ENCODE measurements at regions of chr7 and their contacts with region 1.

Region 1: DNA sequence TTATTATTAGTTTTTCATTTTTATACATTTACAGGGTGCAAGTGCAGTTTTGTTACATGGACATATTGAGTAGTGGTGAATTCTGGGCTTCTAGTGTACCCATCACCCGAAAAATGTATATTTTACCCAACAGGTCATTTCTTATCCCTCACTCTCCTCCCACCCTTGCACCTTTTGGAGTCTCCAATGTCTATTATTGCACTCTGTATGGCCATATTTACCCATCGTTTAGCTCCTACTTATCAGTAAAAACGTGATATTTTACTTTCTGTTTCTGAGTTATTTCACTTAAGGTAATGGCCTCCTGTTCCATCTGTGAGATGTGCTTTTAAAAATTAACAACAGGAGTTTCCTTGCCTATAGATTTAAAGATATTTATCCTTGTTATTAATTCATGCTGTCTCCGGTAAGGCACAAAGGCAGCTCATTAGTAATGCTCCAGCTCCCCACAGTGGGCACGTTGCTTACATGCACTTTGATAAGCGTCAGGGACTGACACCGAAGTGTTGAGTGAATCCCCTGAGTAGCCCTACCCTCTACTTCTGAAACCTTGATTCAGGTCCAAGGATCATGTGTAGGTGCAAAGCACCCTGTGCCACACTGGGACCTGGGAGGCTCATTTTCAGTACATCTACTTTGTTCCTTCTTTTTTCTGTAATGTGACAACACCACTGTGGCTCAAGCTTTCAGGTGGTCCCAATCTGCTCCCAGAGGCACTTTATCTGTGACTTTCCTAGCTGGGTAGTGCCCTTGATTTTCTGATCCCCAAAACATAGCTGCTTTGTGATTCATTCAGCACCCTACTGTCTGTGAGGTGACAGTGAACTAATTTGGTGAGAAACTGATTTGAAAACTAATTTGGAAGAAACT is 27.3 kb downstream of the HYAL4 start:
- DNase-seq: peak; percentile 61
- H3K4me3 ChIP-seq: no peak overlapping the region
- H3K27ac ChIP-seq: no peak overlapping the region
- H3K4me1 ChIP-seq: peaks cover 0 to 14% of the 10 kb centered on the region in 2 experiments; a peak in 2 of 4 replicates
- H3K27me3 ChIP-seq: no peaks in the 10 kb centered on the region; the same call in 1 of the 2 replicates
- CTCF ChIP-seq: peak; percentile 58
- EP300 ChIP-seq: no peak; a peak in 1 of 4 replicates
- RAD21 ChIP-seq: peak; percentile 93

Region 2: GRCh38 chr7:123305840-123306375 is 566.3 kb before region 1 on chr7:
- CTCF ChIA-PET with region 1: no interaction called
- POLR2A ChIA-PET with region 1: no interaction called
- DNase-seq: no peak
- H3K4me3 ChIP-seq: no peak overlapping the region
- H3K27ac ChIP-seq: no peak overlapping the region
- H3K4me1 ChIP-seq: peaks cover 0 to 6% of the 10 kb centered on the region in 2 experiments; a peak in 2 of 4 replicates
- H3K27me3 ChIP-seq: no peaks in the 10 kb centered on the region
- CTCF ChIP-seq: no peak
- EP300 ChIP-seq: no peak
- RAD21 ChIP-seq: no peak

Region 3: GRCh38 chr7:123580406-123581161 is 291.6 kb before region 1 on chr7:
- CTCF ChIA-PET with region 1: interaction called, 23 read pairs
- POLR2A ChIA-PET with region 1: no interaction called
- DNase-seq: peak; percentile 34
- H3K4me3 ChIP-seq: no peak overlapping the region; a peak in 1 of 4 replicates
- H3K27ac ChIP-seq: no peak overlapping the region
- H3K4me1 ChIP-seq: no peaks in the 10 kb centered on the region; a peak in 1 of 4 replicates
- H3K27me3 ChIP-seq: peaks cover 13% of the 10 kb centered on the region; the same call in 1 of the 2 replicates
- CTCF ChIP-seq: peak; percentile 84
- EP300 ChIP-seq: no peak
- RAD21 ChIP-seq: peak; percentile 90

Region 4: DNA sequence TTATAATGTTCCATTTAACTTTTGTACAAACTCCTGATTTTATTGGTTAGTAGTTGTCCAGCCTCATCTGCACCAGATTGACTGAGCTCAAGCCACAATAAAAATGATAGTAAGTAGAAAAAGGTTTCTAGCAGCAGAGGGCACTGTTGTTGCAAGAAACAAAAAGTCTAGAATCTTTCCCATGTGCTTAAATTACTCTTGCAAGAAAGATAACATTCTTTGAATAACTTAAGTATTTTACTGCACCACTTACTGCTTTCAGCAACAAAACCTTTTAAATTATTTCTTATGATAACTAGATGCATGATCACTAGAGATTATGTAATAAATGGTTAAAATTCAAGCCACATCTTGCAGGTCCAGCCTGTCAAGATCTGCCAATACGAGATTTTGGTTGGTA is 189.5 kb before region 1 on chr7:
- CTCF ChIA-PET with region 1: interaction called, 19 read pairs
- POLR2A ChIA-PET with region 1: no interaction called
- DNase-seq: no peak
- H3K4me3 ChIP-seq: no peak overlapping the region
- H3K27ac ChIP-seq: peak overlapping the region in 1 of 2 experiments; percentile 43; a peak in 1 of 4 replicates
- H3K4me1 ChIP-seq: peaks cover 0 to 11% of the 10 kb centered on the region in 2 experiments; a peak in 2 of 4 replicates
- H3K27me3 ChIP-seq: no peaks in the 10 kb centered on the region
- CTCF ChIP-seq: peak; percentile 82
- EP300 ChIP-seq: no peak
- RAD21 ChIP-seq: peak; percentile 79

Region 5: DNA sequence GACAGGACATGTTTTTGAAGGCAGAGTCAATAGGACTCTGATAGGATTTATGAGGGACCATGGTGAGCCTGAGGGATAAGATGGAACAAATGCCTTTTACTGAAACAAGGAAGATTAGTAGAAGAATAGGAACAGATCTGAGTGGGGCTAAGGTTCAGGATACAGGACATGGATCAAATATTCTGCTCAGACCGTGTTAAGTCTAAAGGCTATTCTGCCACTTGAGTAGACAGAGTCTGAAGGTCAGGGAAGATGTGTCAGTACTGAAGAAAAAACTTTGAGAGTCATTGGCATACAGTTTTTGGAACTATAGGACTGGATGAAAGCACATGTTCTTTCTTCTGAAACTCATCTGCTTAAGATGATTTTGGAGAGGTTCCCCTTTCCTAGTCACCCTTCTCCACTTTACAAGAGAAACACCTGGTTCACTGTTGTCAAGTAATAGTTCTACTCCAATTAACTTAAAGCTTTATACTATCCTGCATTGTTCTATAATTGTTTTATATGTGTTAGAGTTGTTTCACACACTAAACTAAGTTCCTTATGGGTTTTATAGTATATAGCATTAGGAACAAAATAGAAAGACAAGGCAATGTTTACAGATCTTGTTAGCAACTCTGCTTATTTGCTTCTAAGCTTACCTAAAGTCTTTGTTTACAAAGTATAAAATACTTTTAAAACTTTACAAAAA is 166.9 kb before region 1 on chr7:
- CTCF ChIA-PET with region 1: interaction called, 11 read pairs
- POLR2A ChIA-PET with region 1: no interaction called
- DNase-seq: no peak
- H3K4me3 ChIP-seq: no peak overlapping the region
- H3K27ac ChIP-seq: no peak overlapping the region
- H3K4me1 ChIP-seq: peaks cover under 1 to 10% of the 10 kb centered on the region in 2 experiments; a peak in 2 of 4 replicates
- H3K27me3 ChIP-seq: no peaks in the 10 kb centered on the region
- CTCF ChIP-seq: no peak
- EP300 ChIP-seq: no peak
- RAD21 ChIP-seq: no peak

Region 6: GRCh38 chr7:123748734-123749536 is 123.3 kb before region 1 on chr7 and contains the start of gene WASL:
- CTCF ChIA-PET with region 1: interaction called, 10 read pairs
- POLR2A ChIA-PET with region 1: no interaction called
- DNase-seq: peak; percentile 99
- H3K4me3 ChIP-seq: peak within 1 kb of the TSS; percentile 94 to 100
- H3K27ac ChIP-seq: peak within 1 kb of the TSS; percentile 96 to 100
- H3K4me1 ChIP-seq: peaks cover 27 to 57% of the 10 kb centered on the region in 2 experiments; a peak in 3 of 4 replicates
- H3K27me3 ChIP-seq: no peaks in the 10 kb centered on the region
- CTCF ChIP-seq: no peak
- EP300 ChIP-seq: peak; percentile 26 to 72; a peak in 2 of 4 replicates
- RAD21 ChIP-seq: peak; percentile 19; the same call in 1 of the 2 replicates
- polyA plus RNA-seq, gene WASL: 8.5 and 9.9 TPM in 2 replicates

Region 7: GRCh38 chr7:123792547-123792946 is 79.7 kb before region 1 on chr7:
- CTCF ChIA-PET with region 1: interaction called, 127 read pairs
- POLR2A ChIA-PET with region 1: no interaction called
- DNase-seq: no peak
- H3K4me3 ChIP-seq: no peak overlapping the region
- H3K27ac ChIP-seq: no peak overlapping the region
- H3K4me1 ChIP-seq: no peaks in the 10 kb centered on the region
- H3K27me3 ChIP-seq: no peaks in the 10 kb centered on the region
- CTCF ChIP-seq: no peak
- EP300 ChIP-seq: no peak
- RAD21 ChIP-seq: no peak

Region 8: DNA sequence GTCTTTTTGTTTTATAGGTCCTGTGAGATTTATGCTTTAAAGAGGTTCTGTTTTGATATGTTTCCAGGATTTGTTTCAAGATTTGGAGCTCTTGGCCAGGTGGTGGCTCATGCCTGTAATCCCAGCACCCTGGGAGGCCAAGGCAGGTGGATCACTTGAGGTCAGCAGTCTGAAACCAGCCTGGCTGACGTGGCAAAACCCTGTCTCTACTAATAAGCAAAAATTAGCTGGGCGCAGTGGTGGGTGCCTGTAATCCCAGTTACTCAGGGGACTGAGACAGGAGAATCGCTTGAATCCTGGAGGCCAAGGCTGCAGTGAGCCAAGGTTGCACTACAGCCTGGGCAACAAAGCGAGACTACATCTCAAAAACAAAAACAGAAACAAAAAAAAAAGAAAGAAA is 35.6 kb before region 1 on chr7:
- CTCF ChIA-PET with region 1: no interaction called
- POLR2A ChIA-PET with region 1: no interaction called
- DNase-seq: no peak
- H3K4me3 ChIP-seq: no peak overlapping the region
- H3K27ac ChIP-seq: no peak overlapping the region
- H3K4me1 ChIP-seq: no peaks in the 10 kb centered on the region
- H3K27me3 ChIP-seq: no peaks in the 10 kb centered on the region
- CTCF ChIP-seq: no peak
- EP300 ChIP-seq: no peak
- RAD21 ChIP-seq: no peak

Region 9: GRCh38 chr7:123888192-123888591 is 16.0 kb after region 1 on chr7:
- CTCF ChIA-PET with region 1: interaction called, 19 read pairs
- POLR2A ChIA-PET with region 1: no interaction called
- DNase-seq: no peak
- H3K4me3 ChIP-seq: no peak overlapping the region
- H3K27ac ChIP-seq: no peak overlapping the region
- H3K4me1 ChIP-seq: no peaks in the 10 kb centered on the region
- H3K27me3 ChIP-seq: no peaks in the 10 kb centered on the region
- CTCF ChIP-seq: no peak
- EP300 ChIP-seq: no peak
- RAD21 ChIP-seq: no peak

Region 10: DNA sequence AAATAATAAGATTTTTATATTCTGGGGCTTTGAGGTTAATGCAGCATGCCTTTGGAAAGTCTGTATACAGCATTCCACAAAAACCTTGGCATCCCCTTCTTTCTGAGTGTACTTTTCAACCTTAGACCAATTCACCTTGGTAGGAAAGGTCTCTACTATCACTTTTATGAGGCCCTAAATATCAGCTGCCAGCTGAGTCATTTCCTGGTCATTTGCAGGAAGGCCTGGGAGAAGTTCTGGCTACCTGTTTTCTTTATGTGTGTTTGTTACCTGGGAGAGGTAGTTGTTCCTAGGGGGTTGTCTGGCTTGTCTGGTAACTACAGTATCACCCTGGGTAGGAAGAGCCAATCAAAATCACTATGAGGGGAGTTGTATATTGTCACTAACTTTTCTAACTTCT is 56.9 kb after region 1 on chr7:
- CTCF ChIA-PET with region 1: no interaction called
- POLR2A ChIA-PET with region 1: no interaction called
- DNase-seq: no peak
- H3K4me3 ChIP-seq: no peak overlapping the region
- H3K27ac ChIP-seq: no peak overlapping the region
- H3K4me1 ChIP-seq: no peaks in the 10 kb centered on the region
- H3K27me3 ChIP-seq: no peaks in the 10 kb centered on the region
- CTCF ChIP-seq: no peak
- EP300 ChIP-seq: no peak
- RAD21 ChIP-seq: no peak

Region 11: GRCh38 chr7:124201768-124202349 is 329.6 kb after region 1 on chr7:
- CTCF ChIA-PET with region 1: no interaction called
- POLR2A ChIA-PET with region 1: no interaction called
- DNase-seq: no peak
- H3K4me3 ChIP-seq: no peak overlapping the region
- H3K27ac ChIP-seq: no peak overlapping the region
- H3K4me1 ChIP-seq: no peaks in the 10 kb centered on the region
- H3K27me3 ChIP-seq: no peaks in the 10 kb centered on the region
- CTCF ChIP-seq: no peak
- EP300 ChIP-seq: no peak
- RAD21 ChIP-seq: no peak

Measured in SK-N-SH (cell line).